Posterior vena cava (tissue), 2 donors: ENCODE measurements at regions of chr12 and their contacts with region 1.

Region 1: GRCh38 chr12:119528241-119528640 is 65.3 kb upstream of the TMEM233 start:
- DNase-seq: no peak

Region 2: GRCh38 chr12:119480560-119481222 is 47.5 kb before region 1 on chr12:
- intact Hi-C with region 1: loop called in 1 of 2 experiments (anchors 1 kb)
- DNase-seq: no peak